CD4-positive, alpha-beta memory T cell (primary cell): ENCODE measurements at regions of chr1 and their contacts with region 1.

Region 1: DNA sequence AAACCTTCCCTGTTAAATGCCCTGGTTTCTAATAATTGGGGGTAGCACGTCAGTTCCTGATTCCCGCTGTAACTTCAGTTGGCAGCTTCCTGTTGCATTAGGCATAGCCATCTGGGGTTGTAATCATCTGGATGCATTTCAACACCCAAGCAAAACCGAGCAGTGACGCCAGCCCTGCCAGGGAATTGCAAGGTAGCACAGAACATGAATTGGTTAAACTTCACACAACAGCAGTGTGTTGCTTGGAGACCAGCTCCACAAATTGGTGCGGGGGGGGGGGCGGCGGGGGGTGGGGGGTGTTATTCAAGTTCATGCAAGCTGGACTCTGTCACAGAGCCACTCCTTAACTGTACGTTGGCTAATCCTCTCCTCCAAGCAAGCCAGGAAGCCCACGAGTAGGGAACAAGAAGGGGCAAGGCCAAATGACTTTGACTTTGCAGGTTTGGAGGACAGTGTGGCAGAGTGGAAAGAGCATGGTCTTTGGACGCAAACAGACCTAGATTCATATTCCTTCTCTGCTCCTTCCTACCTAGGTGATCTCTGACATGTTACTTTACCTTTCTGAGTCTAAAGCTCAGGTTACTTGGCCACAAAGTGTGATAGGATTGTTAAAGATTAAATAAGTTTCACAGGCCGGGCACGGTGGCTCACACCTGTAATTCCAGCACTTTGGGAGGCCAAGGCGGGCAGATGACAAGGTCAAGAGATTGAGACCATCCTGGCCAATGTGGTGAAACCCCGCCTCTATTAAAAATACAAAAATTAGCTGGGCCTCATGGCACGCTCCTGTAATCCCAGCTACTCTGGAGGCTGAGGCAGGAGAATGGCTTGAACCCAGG is 4.7 kb downstream of the LAX1 start:
- DNase-seq: no peak
- H3K4me3 ChIP-seq: no peak overlapping the region
- H3K4me3 Mint-ChIP-seq: peak overlapping the region in 6 of 8 donors; percentile 40 to 62 (median 47)
- H3K27ac ChIP-seq: no peak overlapping the region
- H3K27ac Mint-ChIP-seq: peak overlapping the region; percentile 41 to 97 (median 84)
- H3K4me1 ChIP-seq: peaks cover 26% of the 10 kb centered on the region
- H3K4me1 Mint-ChIP-seq: peaks cover 22 to 56% (median 36%) of the 10 kb centered on the region in 4 donors
- H3K27me3 ChIP-seq: no peaks in the 10 kb centered on the region
- H3K27me3 Mint-ChIP-seq: no peaks in the 10 kb centered on the region

Region 2: GRCh38 chr1:203504397-203505250 is 265.1 kb before region 1 on chr1:
- CTCF ChIA-PET with region 1: no interaction called
- POLR2A ChIA-PET with region 1: no interaction called
- intact Hi-C with region 1: loop called (anchors 10 kb)
- DNase-seq: peak; percentile 60 to 70 (median 63)
- H3K4me3 ChIP-seq: no peak overlapping the region
- H3K4me3 Mint-ChIP-seq: no peak overlapping the region
- H3K27ac ChIP-seq: no peak overlapping the region
- H3K27ac Mint-ChIP-seq: peak overlapping the region in 1 of 7 donors; percentile 3
- H3K4me1 ChIP-seq: no peaks in the 10 kb centered on the region
- H3K4me1 Mint-ChIP-seq: peaks cover 0 to 7% (median 4%) of the 10 kb centered on the region in 4 donors
- H3K27me3 ChIP-seq: no peaks in the 10 kb centered on the region
- H3K27me3 Mint-ChIP-seq: no peaks in the 10 kb centered on the region

Region 3: GRCh38 chr1:203555076-203555475 is 214.6 kb before region 1 on chr1:
- CTCF ChIA-PET with region 1: no interaction called
- POLR2A ChIA-PET with region 1: no interaction called
- intact Hi-C with region 1: no loop called
- DNase-seq: no peak
- H3K4me3 ChIP-seq: no peak overlapping the region
- H3K4me3 Mint-ChIP-seq: no peak overlapping the region
- H3K27ac ChIP-seq: no peak overlapping the region
- H3K27ac Mint-ChIP-seq: no peak overlapping the region
- H3K4me1 ChIP-seq: no peaks in the 10 kb centered on the region
- H3K4me1 Mint-ChIP-seq: no peaks in the 10 kb centered on the region
- H3K27me3 ChIP-seq: no peaks in the 10 kb centered on the region
- H3K27me3 Mint-ChIP-seq: peaks cover 0 to 3% of the 10 kb centered on the region in 2 donors

Region 4: GRCh38 chr1:203673550-203674427 is 95.9 kb before region 1 on chr1:
- CTCF ChIA-PET with region 1: interaction called, 3 read pairs
- POLR2A ChIA-PET with region 1: interaction called, 5 read pairs
- intact Hi-C with region 1: loop called (anchors 2 kb)
- DNase-seq: peak; percentile 84 to 94 (median 88)
- H3K4me3 ChIP-seq: peak overlapping the region in 1 of 2 donors; percentile 30
- H3K4me3 Mint-ChIP-seq: peak overlapping the region; percentile 78 to 93 (median 84)
- H3K27ac ChIP-seq: peak overlapping the region; percentile 65
- H3K27ac Mint-ChIP-seq: peak overlapping the region; percentile 93 to 99 (median 98)
- H3K4me1 ChIP-seq: peaks cover 82% of the 10 kb centered on the region
- H3K4me1 Mint-ChIP-seq: peaks cover 56 to 92% (median 77%) of the 10 kb centered on the region in 4 donors
- H3K27me3 ChIP-seq: no peaks in the 10 kb centered on the region
- H3K27me3 Mint-ChIP-seq: no peaks in the 10 kb centered on the region

Region 5: DNA sequence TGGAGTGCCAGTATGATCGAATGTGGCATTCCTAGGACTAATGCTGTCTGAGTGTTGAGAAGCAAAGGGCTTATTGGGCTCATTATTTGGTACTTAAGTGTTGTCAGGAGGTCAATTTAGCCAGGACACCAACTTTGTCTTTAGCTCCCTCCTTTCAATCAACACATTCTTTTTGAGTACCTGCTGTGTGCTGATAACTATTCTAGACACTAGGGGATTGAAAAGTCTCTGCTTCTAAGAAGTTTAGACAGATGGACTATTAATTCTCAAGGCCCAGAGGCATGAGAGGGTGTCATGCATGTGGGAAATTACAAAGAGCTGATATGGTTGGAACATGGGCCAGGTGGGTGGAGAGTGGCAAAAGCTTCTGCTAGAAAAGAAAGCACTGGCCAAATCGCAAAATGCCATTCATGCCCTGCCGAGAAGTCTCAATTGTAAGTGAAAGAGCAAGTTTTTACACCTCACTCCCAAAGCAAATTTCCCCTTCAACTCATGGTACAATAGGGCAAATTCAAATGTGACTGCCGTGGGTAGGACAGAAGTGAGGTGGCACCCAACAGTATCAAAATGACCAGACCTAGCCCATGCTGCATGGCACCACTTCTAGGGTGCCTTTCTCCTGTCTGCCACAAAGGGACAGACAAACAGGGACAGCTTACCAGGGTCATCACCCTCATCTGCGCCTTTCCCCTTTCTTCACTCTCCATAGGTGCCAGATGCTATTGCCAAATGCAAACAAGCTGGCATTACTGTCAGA is 58.3 kb before region 1 on chr1:
- CTCF ChIA-PET with region 1: no interaction called
- POLR2A ChIA-PET with region 1: interaction called, 16 read pairs
- intact Hi-C with region 1: loop called (anchors 5 kb)
- DNase-seq: no peak
- H3K4me3 ChIP-seq: no peak overlapping the region
- H3K4me3 Mint-ChIP-seq: no peak overlapping the region
- H3K27ac ChIP-seq: no peak overlapping the region
- H3K27ac Mint-ChIP-seq: peak overlapping the region in 5 of 7 donors; percentile 31 to 84 (median 79)
- H3K4me1 ChIP-seq: no peaks in the 10 kb centered on the region
- H3K4me1 Mint-ChIP-seq: peaks cover 0 to 2% (median 0%) of the 10 kb centered on the region in 4 donors
- H3K27me3 ChIP-seq: no peaks in the 10 kb centered on the region
- H3K27me3 Mint-ChIP-seq: no peaks in the 10 kb centered on the region

Region 6: DNA sequence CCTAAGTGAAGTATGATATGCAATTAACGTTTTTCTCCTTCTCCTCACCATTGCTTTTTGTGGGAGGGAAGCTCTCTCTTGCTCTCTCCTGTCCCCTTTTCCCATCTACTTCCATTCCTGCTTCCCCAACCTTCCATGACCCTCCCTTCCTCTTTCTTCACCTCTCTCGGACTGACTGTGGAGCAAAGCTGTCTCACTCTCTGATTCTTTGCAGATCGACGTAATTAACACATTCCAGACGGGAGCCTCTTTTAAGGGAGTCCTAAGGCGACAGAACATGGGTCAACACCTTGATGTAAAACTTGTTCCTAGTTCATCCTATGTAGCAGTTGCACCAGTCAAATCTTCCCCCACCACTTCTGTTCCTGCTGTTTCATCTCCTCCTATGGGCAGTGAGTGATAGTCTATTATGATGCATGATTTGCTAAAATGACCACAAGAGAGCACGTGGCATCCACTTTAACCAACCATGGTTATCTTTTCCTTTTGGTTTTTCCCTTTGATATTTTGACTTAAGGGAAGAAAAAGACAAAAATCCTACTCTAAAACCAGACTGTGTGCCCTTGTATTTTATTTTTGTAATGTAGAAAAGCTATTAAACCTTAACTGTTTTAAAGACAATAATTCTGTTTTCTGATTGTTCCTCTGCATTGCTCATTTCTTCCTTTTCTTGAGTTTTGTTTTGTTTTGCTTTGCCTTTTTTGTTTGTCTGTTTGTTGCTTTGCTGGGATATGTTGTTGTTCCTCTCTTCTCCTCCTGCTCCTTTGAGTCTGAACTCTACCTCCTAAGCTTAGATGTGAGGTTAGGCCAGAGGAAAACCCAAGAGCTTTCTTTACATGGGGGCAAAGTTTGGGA is 36.5 kb before region 1 on chr1:
- CTCF ChIA-PET with region 1: interaction called, 4 read pairs
- POLR2A ChIA-PET with region 1: interaction called, 13 read pairs
- intact Hi-C with region 1: no loop called
- DNase-seq: no peak
- H3K4me3 ChIP-seq: no peak overlapping the region
- H3K4me3 Mint-ChIP-seq: no peak overlapping the region
- H3K27ac ChIP-seq: no peak overlapping the region
- H3K27ac Mint-ChIP-seq: peak overlapping the region in 4 of 7 donors; percentile 18 to 84 (median 70)
- H3K4me1 ChIP-seq: no peaks in the 10 kb centered on the region
- H3K4me1 Mint-ChIP-seq: peaks cover 0 to 5% (median 4%) of the 10 kb centered on the region in 4 donors
- H3K27me3 ChIP-seq: no peaks in the 10 kb centered on the region
- H3K27me3 Mint-ChIP-seq: no peaks in the 10 kb centered on the region

Region 7: GRCh38 chr1:203754455-203754864 is 15.3 kb before region 1 on chr1:
- CTCF ChIA-PET with region 1: interaction called, 8 read pairs
- POLR2A ChIA-PET with region 1: interaction called, 24 read pairs
- intact Hi-C with region 1: loop called (anchors 1 kb)
- DNase-seq: peak; percentile 32 to 53 (median 40)
- H3K4me3 ChIP-seq: no peak overlapping the region
- H3K4me3 Mint-ChIP-seq: peak overlapping the region; percentile 9 to 81 (median 68)
- H3K27ac ChIP-seq: peak overlapping the region; percentile 45
- H3K27ac Mint-ChIP-seq: peak overlapping the region; percentile 76 to 94 (median 92)
- H3K4me1 ChIP-seq: peaks cover 34% of the 10 kb centered on the region
- H3K4me1 Mint-ChIP-seq: peaks cover 19 to 42% (median 29%) of the 10 kb centered on the region in 4 donors
- H3K27me3 ChIP-seq: no peaks in the 10 kb centered on the region
- H3K27me3 Mint-ChIP-seq: no peaks in the 10 kb centered on the region

Region 8: GRCh38 chr1:204257954-204258752 is 488.4 kb after region 1 on chr1:
- CTCF ChIA-PET with region 1: no interaction called
- POLR2A ChIA-PET with region 1: no interaction called
- intact Hi-C with region 1: no loop called
- DNase-seq: no peak
- H3K4me3 ChIP-seq: no peak overlapping the region
- H3K4me3 Mint-ChIP-seq: no peak overlapping the region
- H3K27ac ChIP-seq: no peak overlapping the region
- H3K27ac Mint-ChIP-seq: peak overlapping the region in 1 of 7 donors; percentile 5
- H3K4me1 ChIP-seq: no peaks in the 10 kb centered on the region
- H3K4me1 Mint-ChIP-seq: no peaks in the 10 kb centered on the region
- H3K27me3 ChIP-seq: no peaks in the 10 kb centered on the region
- H3K27me3 Mint-ChIP-seq: peaks cover 0 to 2% of the 10 kb centered on the region in 2 donors